Right ventricle myocardium superior (tissue), 1 donor: ENCODE measurements at regions of chr2 and their contacts with region 1.

Region 1: DNA sequence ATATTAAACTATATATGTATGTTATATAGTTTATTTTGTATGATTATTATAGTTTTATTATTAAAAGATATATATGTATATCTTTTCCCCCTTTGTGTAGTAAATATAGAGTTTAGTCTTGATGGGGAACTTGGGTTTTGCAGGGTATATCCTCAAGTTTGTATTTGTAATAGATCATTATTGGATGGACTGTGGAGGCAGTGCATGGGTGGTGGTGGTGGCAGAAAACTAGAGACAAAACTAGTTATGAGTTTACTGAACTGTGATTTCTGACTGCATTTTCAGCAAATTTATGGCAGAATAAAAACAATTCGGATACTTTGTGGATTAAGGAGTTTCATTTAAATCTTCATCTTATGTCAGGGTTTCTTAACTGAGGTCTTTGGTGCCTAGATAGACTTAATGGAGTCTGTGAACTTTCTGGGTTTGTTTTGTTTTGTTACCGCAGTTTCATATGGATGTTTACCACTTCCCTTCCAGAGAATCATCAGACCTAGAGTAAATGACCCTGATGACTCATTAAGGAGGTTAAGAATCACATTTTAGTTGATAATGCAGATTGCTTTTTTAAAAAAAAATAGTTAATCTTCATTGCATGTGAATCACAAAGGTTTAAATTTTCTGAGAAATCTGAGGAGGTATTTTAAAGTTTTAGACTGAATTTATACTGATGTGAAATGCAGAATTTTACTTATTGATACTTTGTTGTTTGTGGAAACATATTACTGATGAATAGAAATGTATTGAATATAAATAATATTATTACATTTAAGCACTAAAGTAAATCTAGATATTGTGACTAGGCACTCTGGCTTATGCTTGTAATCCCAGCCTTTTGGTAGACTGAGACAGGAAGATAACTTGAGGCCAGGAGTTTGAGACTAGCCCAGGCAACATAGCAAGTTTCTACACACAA is 14.5 kb downstream of the EPC2 start:
- DNase-seq: no peak
- ATAC-seq: no peak

Region 2: GRCh38 chr2:148719941-148720436 is 60.9 kb after region 1 on chr2:
- intact Hi-C with region 1: loop called (anchors 10 kb)
- DNase-seq: peak; percentile 30
- ATAC-seq: peak; percentile 35

Region 3: GRCh38 chr2:148764815-148765214 is 105.8 kb after region 1 on chr2:
- intact Hi-C with region 1: loop called (anchors 10 kb)
- DNase-seq: no peak
- ATAC-seq: no peak